ENCODE measurements at regions of chr1 and their contacts with region 1.

Region 1: DNA sequence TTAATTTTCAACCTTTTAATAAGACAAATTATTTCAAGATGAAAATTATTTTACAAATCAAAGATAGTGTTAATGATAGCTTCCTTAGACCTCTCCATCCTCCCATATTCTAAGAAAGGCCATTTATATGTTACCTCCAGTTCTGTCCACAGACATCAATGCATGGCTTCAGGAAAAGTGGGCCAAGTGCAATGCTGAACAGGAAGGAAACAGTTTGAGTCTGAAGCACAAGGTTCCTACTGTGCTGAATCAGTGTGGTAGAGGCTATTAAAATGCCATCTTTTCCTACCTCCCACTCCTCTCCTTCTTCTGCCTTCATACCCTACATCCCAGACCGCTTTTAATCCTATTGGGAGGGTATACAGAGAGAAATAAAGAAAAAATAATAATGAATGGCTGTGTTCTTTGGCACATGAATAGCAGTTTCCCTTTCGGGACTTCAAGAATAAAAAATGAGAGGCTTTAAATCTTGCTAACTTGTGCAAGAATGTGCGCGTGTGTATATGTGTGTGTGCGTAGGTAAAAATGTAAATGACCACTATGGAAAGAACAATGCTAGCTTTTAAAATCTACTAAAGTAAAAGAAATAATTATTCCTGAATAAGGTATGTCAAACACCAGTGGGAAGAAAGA is 62.6 kb upstream of the C1orf105 start:
- DNase-seq: peak; percentile 22
- H3K4me3 ChIP-seq: peak overlapping the region; percentile 37
- H3K27ac ChIP-seq: peak overlapping the region; percentile 51
- H3K4me1 ChIP-seq: peaks cover 36% of the 10 kb centered on the region
- CTCF ChIP-seq: no peak

Region 2: DNA sequence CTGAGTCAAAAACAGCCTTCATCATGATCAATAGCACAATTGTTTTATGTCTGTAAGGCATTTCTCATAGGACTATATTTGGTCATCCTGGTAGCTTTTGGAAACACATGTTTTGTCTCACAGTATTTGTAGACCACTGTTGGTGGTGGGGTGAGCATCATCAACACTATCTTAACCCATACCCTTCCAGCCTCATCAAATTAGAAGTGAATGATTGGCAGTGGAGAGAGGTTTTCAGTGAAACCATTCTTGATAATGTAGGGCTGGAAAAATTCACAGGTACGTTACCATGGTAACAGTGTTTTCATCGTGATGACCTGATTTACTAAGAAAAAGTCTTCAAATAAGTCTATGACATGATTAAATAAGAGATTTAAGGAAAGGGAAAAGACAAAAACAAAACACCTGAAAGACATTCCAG is 17.4 kb after region 1 on chr1:
- CTCF ChIA-PET with region 1: interaction called, 3 read pairs
- POLR2A ChIA-PET with region 1: interaction called, 34 read pairs
- intact Hi-C with region 1: loop called (anchors 2 kb)
- DNase-seq: no peak
- H3K4me3 ChIP-seq: no peak overlapping the region
- H3K27ac ChIP-seq: no peak overlapping the region
- H3K4me1 ChIP-seq: peaks cover 19% of the 10 kb centered on the region
- CTCF ChIP-seq: no peak

Region 3: DNA sequence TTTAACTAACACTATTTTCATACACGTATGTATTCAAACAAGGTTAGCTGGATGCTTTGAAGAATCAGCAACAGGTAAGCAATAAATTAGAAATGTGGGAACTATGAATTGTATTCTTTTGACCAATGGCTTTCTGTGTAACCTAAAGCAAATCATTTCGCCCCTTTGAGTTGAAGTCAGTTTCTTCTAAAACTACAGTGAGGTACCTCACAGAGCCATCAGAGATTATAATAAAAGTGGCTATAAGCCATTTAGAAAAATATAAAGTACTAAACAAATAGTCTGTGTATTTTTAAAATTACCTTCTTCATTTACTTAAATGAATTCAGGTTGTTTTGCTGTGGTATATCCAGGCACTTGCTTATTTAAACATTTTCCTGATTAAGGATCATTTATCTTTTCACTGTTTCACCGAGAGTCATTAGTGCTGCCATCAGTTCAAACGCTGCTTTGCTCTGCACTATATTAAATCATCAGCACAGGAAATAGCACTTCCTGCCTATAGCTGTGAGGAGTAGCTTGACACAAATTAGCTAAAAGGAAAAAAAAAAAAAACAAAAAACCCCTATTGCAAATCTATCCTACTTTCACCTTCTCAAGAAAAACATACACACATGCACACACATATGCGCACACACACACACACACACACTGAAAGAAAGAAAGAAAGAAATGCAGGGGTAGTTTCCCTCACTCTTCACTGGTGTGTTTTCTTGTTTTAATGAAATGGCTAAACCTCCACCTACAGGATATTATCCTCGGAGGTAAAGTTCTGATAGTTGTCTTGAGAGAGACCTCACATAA is 22.8 kb after region 1 on chr1:
- CTCF ChIA-PET with region 1: interaction called, 3 read pairs
- POLR2A ChIA-PET with region 1: interaction called, 34 read pairs
- intact Hi-C with region 1: loop called (anchors 2 kb)
- DNase-seq: peak; percentile 78
- H3K4me3 ChIP-seq: peak overlapping the region; percentile 54
- H3K27ac ChIP-seq: peak overlapping the region; percentile 72
- H3K4me1 ChIP-seq: peaks cover 37% of the 10 kb centered on the region
- CTCF ChIP-seq: 0 out of 2 replicates have a peak, but pooled peaks have one; percentile 23

Region 4: GRCh38 chr1:172421974-172422604 is 64.2 kb after region 1 on chr1:
- CTCF ChIA-PET with region 1: no interaction called
- POLR2A ChIA-PET with region 1: no interaction called
- intact Hi-C with region 1: no loop called
- DNase-seq: no peak
- H3K4me3 ChIP-seq: no peak overlapping the region
- H3K27ac ChIP-seq: no peak overlapping the region
- H3K4me1 ChIP-seq: no peaks in the 10 kb centered on the region
- CTCF ChIP-seq: no peak

Measured in OCI-LY7 (cell line).